Heart right ventricle (tissue), 16 donors: ENCODE measurements at regions of chr6 and their contacts with region 1.

Region 1: DNA sequence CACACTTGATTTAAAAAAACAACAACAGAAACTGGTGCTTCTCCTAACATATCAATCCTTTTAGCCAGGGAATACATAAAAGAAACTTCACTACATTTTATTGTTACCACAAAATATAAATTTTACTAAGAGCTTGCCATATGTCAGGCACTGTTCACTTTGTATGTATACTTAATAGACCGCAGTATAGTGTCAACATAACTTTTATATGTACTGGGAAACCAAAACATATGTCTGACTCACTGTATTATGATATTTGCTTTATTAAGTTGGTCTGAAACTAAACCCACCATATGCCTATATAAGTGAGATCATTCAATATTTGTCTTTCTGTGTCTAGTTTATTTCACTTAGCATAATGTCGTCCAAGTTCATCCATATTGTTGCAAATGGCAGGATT is 108.4 kb downstream of the KLHL32 start:
- DNase-seq: no peak
- ATAC-seq: no peak
- H3K4me3 ChIP-seq: no peak overlapping the region
- H3K27ac ChIP-seq: no peak overlapping the region
- H3K4me1 ChIP-seq: no peaks in the 10 kb centered on the region
- H3K27me3 ChIP-seq: no peaks in the 10 kb centered on the region
- CTCF ChIP-seq: no peak

Region 2: GRCh38 chr6:96823743-96824142 is 209.2 kb before region 1 on chr6:
- intact Hi-C with region 1: loop called in 1 of 10 experiments (anchors 10 kb)
- DNase-seq: no peak
- ATAC-seq: no peak
- H3K4me3 ChIP-seq: no peak overlapping the region
- H3K27ac ChIP-seq: no peak overlapping the region
- H3K4me1 ChIP-seq: no peaks in the 10 kb centered on the region
- H3K27me3 ChIP-seq: no peaks in the 10 kb centered on the region
- CTCF ChIP-seq: no peak

Region 3: DNA sequence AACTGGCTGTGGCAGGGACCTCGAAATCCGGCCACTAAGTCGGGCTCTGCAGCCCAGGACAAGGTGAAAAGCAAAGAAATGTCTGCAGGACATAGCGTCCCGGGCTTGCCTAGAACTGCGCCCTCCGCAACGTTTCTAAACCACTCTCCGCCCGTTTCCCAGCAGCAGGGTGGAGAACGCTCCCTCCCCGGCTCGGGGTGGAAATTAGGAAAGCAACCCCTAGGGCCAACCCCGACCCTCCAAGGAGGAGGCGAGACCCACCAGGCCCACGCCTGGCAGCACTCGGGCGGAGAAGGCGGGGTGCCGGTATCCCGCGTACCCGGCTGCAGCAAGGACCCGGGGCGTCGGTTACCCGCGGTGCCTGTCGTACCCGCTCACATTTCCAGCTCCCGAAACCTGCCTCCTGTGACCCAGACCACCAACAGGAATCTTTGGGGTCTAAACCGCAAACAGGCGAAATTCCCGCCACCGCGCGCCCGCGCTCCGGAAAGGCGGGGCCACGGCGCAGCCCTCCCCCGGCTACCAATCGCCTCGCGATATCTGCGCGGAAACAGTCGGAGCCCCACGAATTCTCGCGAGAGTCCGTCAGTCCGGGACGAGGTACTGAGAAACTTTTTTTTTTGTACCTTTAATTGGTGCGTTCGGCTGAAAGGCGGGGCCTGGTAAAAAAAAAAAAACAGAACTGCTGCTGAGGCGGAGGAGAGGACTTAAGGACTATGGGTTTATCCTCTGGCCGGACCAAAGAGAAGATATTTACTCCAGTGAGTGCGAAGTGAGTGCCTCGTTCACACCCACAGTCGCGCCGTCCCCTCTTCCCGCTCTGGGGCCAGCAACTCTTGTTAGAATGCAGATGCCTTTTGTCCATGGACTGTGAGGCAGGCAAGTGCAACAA is 250.0 kb after region 1 on chr6 and contains the start of gene MMS22L:
- intact Hi-C with region 1: no loop called
- DNase-seq: peak; percentile 93 to 95
- ATAC-seq: peak; percentile 99 to 100 (median 100)
- H3K4me3 ChIP-seq: peak within 1 kb of the TSS; percentile 73 to 99 (median 92)
- H3K27ac ChIP-seq: peak within 1 kb of the TSS in 9 of 10 donors; percentile 44 to 85 (median 57)
- H3K4me1 ChIP-seq: peaks cover 0 to 17% (median 9%) of the 10 kb centered on the region in 9 donors
- H3K27me3 ChIP-seq: no peaks in the 10 kb centered on the region
- CTCF ChIP-seq: no peak
- total RNA-seq, gene MMS22L: 1.6 to 5.1 (median 2.2) TPM